ENCODE measurements at regions of chr1 and their contacts with region 1.

Region 1: DNA sequence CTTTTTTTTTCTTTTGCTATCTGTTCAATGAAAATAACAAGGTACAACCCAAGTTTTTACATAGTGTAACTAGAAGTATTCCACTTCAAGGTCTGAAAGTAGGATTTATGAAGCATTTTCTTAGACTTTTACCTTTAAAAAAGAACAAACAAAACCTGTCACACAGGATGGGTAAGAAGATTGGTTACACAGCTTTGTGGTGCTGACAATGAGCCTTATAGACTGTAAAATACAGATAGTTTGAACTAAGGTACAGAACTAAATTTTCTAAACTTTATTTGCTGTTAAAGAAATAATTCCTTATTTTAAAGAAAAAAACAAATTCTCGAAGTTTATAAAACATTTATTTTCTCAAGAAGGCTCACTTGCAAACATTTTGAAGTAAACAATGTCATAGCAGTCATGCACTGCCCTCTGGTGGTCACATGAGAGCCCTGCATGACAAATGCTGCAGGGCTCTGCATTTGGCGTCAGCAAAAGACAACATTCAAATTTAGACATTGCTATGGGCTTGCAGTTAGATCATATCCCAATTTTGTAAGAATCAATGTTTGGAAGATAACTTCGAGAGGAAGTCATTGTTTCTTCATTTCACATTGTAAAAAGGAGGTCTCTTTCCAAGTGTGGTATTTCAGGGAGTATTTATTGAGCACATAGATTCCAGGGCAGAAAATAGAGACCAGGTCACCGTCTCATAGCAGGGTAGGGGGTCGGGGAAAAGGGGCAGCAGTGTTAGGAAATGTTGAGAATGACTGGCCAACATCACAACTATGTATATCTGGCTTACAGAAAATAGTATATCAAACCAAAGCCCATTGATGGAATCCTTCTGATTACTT is 115.3 kb upstream of the FMN2 start:
- DNase-seq: peak; percentile 85
- H3K4me3 Mint-ChIP-seq: no peak overlapping the region
- H3K27ac Mint-ChIP-seq: no peak overlapping the region
- H3K4me1 Mint-ChIP-seq: no peaks in the 10 kb centered on the region
- H3K27me3 Mint-ChIP-seq: peaks cover 31% of the 10 kb centered on the region
- CTCF ChIP-seq: peak; percentile 100

Region 2: DNA sequence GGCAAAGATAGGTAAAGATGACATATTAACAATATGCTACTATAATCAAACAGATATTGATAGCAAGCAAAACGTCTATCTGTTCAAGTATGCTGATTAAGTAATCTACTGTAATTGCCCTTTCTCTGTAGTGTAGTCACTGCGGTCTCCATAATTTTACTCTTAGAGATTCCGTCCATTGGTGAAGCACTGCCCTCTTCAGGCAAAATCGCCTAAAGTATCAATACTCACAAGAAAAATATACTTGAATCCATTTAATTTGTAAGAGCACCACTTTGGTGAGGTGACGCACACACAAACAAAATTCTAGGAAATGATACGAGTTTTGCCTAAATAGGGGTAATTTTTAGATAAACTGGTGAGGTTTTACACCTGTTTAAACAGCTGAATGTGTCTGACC is 1024.5 kb before region 1 on chr1:
- CTCF ChIA-PET with region 1: interaction called, 3 read pairs
- POLR2A ChIA-PET with region 1: no interaction called
- intact Hi-C with region 1: loop called (anchors 5 kb)
- DNase-seq: peak; percentile 82
- H3K4me3 Mint-ChIP-seq: no peak overlapping the region
- H3K27ac Mint-ChIP-seq: no peak overlapping the region
- H3K4me1 Mint-ChIP-seq: peaks cover 12% of the 10 kb centered on the region
- H3K27me3 Mint-ChIP-seq: no peaks in the 10 kb centered on the region
- CTCF ChIP-seq: peak; percentile 89

Region 3: DNA sequence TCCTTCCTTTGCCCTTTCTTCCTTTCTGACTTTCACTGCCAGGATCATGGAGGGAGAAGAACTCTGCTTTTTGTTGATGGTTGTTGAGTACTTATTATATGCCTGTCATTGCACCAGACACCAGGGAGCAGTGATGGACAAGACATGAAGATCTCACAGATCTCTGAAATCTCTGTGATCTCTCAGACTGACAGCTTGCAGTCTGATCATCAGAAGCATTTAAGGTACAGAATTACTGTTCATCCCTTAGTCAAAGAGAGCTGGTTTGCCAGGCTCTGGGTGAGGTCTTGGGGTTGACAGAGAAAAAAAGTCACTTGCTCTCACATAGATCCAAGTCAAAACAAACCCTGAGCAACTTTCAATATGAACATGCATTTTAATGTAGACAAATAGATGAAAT is 184.2 kb before region 1 on chr1:
- CTCF ChIA-PET with region 1: no interaction called
- POLR2A ChIA-PET with region 1: no interaction called
- intact Hi-C with region 1: loop called (anchors 2 kb)
- DNase-seq: peak; percentile 44
- H3K4me3 Mint-ChIP-seq: no peak overlapping the region
- H3K27ac Mint-ChIP-seq: no peak overlapping the region
- H3K4me1 Mint-ChIP-seq: no peaks in the 10 kb centered on the region
- H3K27me3 Mint-ChIP-seq: no peaks in the 10 kb centered on the region
- CTCF ChIP-seq: peak; percentile 6

Region 4: GRCh38 chr1:239914751-239915231 is 61.6 kb before region 1 on chr1:
- CTCF ChIA-PET with region 1: interaction called, 6 read pairs
- POLR2A ChIA-PET with region 1: interaction called, 5 read pairs
- intact Hi-C with region 1: loop called (anchors 2 kb)
- DNase-seq: peak; percentile 94
- H3K4me3 Mint-ChIP-seq: no peak overlapping the region
- H3K27ac Mint-ChIP-seq: peak overlapping the region; percentile 59
- H3K4me1 Mint-ChIP-seq: peaks cover 40% of the 10 kb centered on the region
- H3K27me3 Mint-ChIP-seq: no peaks in the 10 kb centered on the region
- CTCF ChIP-seq: peak; percentile 18

Region 5: GRCh38 chr1:239951511-239952140 is 24.7 kb before region 1 on chr1:
- CTCF ChIA-PET with region 1: interaction called, 213 read pairs
- POLR2A ChIA-PET with region 1: interaction called, 8 read pairs
- intact Hi-C with region 1: loop called (anchors 1 kb)
- DNase-seq: peak; percentile 92
- H3K4me3 Mint-ChIP-seq: no peak overlapping the region
- H3K27ac Mint-ChIP-seq: no peak overlapping the region
- H3K4me1 Mint-ChIP-seq: no peaks in the 10 kb centered on the region
- H3K27me3 Mint-ChIP-seq: no peaks in the 10 kb centered on the region
- CTCF ChIP-seq: peak; percentile 95

Region 6: GRCh38 chr1:239960366-239960765 is 16.0 kb before region 1 on chr1:
- CTCF ChIA-PET with region 1: interaction called, 213 read pairs
- POLR2A ChIA-PET with region 1: interaction called, 3 read pairs
- intact Hi-C with region 1: no loop called
- DNase-seq: no peak
- H3K4me3 Mint-ChIP-seq: no peak overlapping the region
- H3K27ac Mint-ChIP-seq: no peak overlapping the region
- H3K4me1 Mint-ChIP-seq: peaks cover 4% of the 10 kb centered on the region
- H3K27me3 Mint-ChIP-seq: peaks cover 40% of the 10 kb centered on the region
- CTCF ChIP-seq: no peak

Region 7: GRCh38 chr1:239987103-239987745 is 10.9 kb after region 1 on chr1:
- CTCF ChIA-PET with region 1: interaction called, 38 read pairs
- POLR2A ChIA-PET with region 1: no interaction called
- intact Hi-C with region 1: no loop called
- DNase-seq: peak; percentile 75
- H3K4me3 Mint-ChIP-seq: no peak overlapping the region
- H3K27ac Mint-ChIP-seq: no peak overlapping the region
- H3K4me1 Mint-ChIP-seq: no peaks in the 10 kb centered on the region
- H3K27me3 Mint-ChIP-seq: no peaks in the 10 kb centered on the region
- CTCF ChIP-seq: peak; percentile 97